Dendritic cell treated with granulocyte-macrophage colony-stimulating factor and Interleukin-4, amounts not matched to agents 40 ng/mL and 50 ng/mL, for 4 days (primary cell): ENCODE measurements at regions of chr20 and their contacts with region 1.

Region 1: GRCh38 chr20:18507218-18508021 is at the start of gene SEC23B:
- H3K4me3 Mint-ChIP-seq: peak within 1 kb of the TSS; percentile 100
- H3K27ac Mint-ChIP-seq: peak within 1 kb of the TSS; percentile 97
- H3K4me1 Mint-ChIP-seq: peaks cover 44% of the 10 kb centered on the region
- H3K27me3 Mint-ChIP-seq: peaks cover 3% of the 10 kb centered on the region

Region 2: DNA sequence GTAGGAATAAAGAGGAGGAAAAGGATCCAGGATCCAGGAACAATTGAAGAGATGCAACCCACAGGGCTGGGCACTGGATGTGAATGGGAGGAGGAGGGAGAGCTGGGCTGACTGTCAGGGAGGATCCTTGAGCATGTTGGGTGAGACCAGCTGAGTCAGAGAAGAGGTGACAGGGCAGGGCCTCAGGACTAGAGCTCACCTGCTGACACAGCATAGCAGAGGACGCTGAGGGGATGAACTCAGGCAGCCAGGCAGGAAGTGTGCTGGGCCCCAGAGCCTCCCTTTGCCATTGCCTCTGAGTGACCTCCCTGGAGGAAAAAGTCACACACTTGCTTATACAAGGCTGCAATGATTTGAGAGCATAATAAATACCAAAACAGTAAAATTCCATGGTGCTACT is 146.8 kb before region 1 on chr20:
- intact Hi-C with region 1: no loop called
- H3K4me3 Mint-ChIP-seq: no peak overlapping the region
- H3K27ac Mint-ChIP-seq: no peak overlapping the region
- H3K4me1 Mint-ChIP-seq: no peaks in the 10 kb centered on the region
- H3K27me3 Mint-ChIP-seq: no peaks in the 10 kb centered on the region

Region 3: GRCh38 chr20:18496740-18497592 is 10.5 kb before region 1 on chr20 and contains the start of gene RBBP9:
- intact Hi-C with region 1: loop called (anchors 1 kb)
- H3K4me3 Mint-ChIP-seq: peak within 1 kb of the TSS; percentile 98
- H3K27ac Mint-ChIP-seq: peak within 1 kb of the TSS; percentile 86
- H3K4me1 Mint-ChIP-seq: peaks cover 13% of the 10 kb centered on the region
- H3K27me3 Mint-ChIP-seq: no peaks in the 10 kb centered on the region

Region 4: DNA sequence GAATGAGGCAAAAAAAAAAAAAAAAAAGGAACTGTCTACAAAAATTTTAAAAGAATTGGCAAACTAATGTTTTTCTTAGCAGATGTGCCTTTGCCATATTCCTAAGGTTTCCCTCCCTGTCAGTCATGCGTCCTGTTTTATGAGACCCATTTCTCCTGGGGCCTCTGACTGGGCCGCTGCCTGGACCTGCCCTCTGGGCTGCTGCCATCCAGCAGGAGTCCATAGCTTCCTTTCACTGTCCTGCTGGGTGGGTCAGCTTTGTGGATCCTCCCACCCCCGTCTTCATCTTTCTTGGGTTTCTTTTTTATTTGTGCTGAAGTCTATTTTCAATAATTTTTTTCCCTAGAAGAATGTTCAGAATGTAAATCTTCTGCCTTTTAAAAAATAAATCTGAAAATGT is 195.3 kb after region 1 on chr20:
- intact Hi-C with region 1: no loop called
- H3K4me3 Mint-ChIP-seq: no peak overlapping the region
- H3K27ac Mint-ChIP-seq: no peak overlapping the region
- H3K4me1 Mint-ChIP-seq: peaks cover 30% of the 10 kb centered on the region
- H3K27me3 Mint-ChIP-seq: no peaks in the 10 kb centered on the region

Region 5: DNA sequence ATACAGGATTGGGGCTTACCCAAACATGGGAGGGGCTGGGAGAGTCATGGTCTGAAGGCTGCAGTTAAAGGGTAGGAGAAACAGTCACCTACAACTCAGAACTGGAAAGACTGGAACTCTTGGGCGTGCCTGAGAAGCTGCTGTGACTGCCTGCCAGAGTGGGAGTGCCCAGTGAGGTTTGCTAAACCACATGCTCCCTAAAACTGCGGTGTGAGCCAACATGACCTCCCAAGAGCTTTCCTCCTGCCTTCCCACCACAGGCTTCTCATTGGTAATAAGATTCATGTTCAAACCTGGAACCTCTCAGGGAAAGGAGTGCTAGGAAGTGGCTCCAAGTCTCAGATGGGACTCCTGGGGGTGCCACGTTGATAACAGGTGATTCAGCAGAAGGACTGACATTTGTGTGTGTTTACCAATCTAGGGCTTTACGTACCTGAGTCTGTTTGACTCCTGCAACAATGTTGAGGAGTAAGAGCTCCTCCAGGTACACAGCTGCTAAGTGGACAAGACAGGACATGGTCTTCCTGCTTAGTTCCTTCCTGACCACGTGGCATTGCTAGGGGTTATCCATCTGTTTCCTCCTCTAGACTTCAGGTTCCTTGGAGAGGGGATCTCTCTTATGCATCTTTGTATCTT is 540.4 kb after region 1 on chr20:
- intact Hi-C with region 1: no loop called
- H3K4me3 Mint-ChIP-seq: no peak overlapping the region
- H3K27ac Mint-ChIP-seq: no peak overlapping the region
- H3K4me1 Mint-ChIP-seq: no peaks in the 10 kb centered on the region
- H3K27me3 Mint-ChIP-seq: no peaks in the 10 kb centered on the region